ENCODE measurements at regions of chr17 and their contacts with region 1.

Region 1: GRCh38 chr17:15091825-15092224 is 173.3 kb downstream of the PMP22 start:
- DNase-seq: no peak
- CTCF ChIP-seq: no peak

Region 2: DNA sequence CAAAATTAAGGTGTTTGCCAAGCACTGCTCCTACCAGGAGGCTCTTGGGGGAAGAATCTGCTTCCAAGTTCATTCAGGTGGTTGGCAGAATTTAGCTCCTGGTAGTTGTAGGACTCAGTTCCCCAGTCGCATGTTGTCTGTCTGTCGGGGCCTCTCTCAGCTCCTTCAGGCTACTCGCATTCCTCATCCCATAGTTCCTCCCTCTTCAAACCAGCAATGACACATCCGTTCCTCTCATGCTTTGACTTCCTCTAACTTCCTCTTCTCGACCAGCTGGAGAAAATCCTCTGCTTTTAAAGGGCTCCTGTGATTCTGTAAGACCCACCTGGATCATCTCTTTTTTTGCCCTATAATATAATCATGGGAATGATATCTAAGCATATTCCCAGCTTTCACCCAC is 65.2 kb after region 1 on chr17:
- in situ Hi-C with region 1: loop called (anchors 10 kb)
- DNase-seq: no peak
- CTCF ChIP-seq: no peak